Sigmoid colon (tissue), 7 donors: ENCODE measurements at regions of chr1 and their contacts with region 1.

Region 1: DNA sequence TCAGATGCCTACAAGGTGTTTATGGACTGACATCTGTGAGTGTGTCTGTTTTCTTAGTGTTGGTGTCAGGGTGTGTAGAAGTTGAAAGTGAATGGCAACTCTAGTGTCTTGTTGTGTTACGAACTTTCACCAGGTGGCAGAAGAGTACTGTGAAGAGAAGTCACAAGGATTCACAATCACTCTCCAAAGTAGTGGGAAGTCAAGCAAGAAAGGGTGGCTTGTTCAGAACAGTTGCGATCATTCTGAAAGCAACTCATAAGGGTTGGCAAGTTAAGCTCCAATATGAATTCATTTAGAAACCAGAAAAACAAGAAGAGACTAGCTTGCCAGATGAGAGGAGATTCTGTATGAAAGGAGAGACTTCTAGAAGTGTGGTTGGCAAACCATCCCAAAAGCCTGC is 86.1 kb downstream of the FASLG start:
- DNase-seq: no peak
- H3K4me3 ChIP-seq: no peak overlapping the region
- H3K27ac ChIP-seq: peak overlapping the region in 2 of 4 donors; percentile 57 to 69
- H3K4me1 ChIP-seq: peaks cover 0 to 21% (median 13%) of the 10 kb centered on the region in 4 donors
- H3K27me3 ChIP-seq: no peaks in the 10 kb centered on the region
- CTCF ChIP-seq: peak; percentile 22 to 46 (median 37)
- EP300 ChIP-seq: no peak
- POLR2A ChIP-seq: no peak

Region 2: GRCh38 chr1:172789866-172790644 is 45.0 kb after region 1 on chr1:
- intact Hi-C with region 1: no loop called
- DNase-seq: no peak
- H3K4me3 ChIP-seq: no peak overlapping the region
- H3K27ac ChIP-seq: no peak overlapping the region
- H3K4me1 ChIP-seq: no peaks in the 10 kb centered on the region
- H3K27me3 ChIP-seq: no peaks in the 10 kb centered on the region
- CTCF ChIP-seq: no peak
- EP300 ChIP-seq: no peak
- POLR2A ChIP-seq: no peak

Region 3: GRCh38 chr1:172826096-172826743 is 81.2 kb after region 1 on chr1:
- intact Hi-C with region 1: loop called (anchors 10 kb)
- DNase-seq: peak; percentile 77
- H3K4me3 ChIP-seq: peak overlapping the region in 3 of 4 donors; percentile 8 to 20 (median 14)
- H3K27ac ChIP-seq: peak overlapping the region; percentile 68 to 85 (median 70)
- H3K4me1 ChIP-seq: peaks cover 0 to 17% (median 11%) of the 10 kb centered on the region in 4 donors
- H3K27me3 ChIP-seq: no peaks in the 10 kb centered on the region
- CTCF ChIP-seq: peak; percentile 33 to 55 (median 44)
- EP300 ChIP-seq: peak in 3 of 4 donors; percentile 40 to 89 (median 57)
- POLR2A ChIP-seq: no peak

Region 4: DNA sequence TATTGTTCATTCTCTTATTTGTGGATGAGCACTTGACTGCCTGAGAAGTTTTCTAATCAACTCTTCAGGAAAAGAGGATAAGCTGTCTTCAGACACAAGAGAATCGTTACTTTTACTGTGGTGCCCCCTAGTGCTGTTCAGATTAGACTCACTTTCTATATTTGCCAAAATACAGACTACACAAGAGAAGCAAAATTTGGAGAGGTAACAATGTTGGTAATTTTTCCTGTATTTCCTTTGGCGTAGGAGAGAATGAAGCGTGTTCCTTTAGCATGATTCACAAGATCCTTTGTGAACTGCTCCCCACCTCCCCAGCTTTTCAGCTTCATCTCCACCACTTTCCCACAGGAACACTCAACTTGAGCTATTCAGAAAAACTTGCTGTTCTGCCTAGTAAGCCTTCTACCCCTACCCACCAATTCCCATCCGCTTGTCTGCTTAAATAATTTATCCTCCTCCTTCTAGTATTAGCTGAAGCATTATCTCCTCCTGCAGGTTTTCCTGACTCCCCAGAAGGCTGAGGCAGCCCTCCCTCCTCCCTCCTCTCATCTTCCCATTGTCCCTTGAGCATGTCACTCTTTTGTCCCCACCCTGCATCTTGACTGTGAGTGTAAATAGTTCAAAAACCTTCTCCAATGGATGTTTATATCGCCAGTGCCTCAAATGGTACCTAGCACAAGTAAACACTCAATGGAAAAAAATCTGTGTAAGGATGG is 457.6 kb after region 1 on chr1:
- intact Hi-C with region 1: loop called (anchors 2 kb)
- DNase-seq: no peak
- H3K4me3 ChIP-seq: no peak overlapping the region
- H3K27ac ChIP-seq: peak overlapping the region in 1 of 4 donors; percentile 20
- H3K4me1 ChIP-seq: peaks cover 0 to 28% (median 11%) of the 10 kb centered on the region in 4 donors
- H3K27me3 ChIP-seq: no peaks in the 10 kb centered on the region
- CTCF ChIP-seq: peak; percentile 17 to 58 (median 46)
- EP300 ChIP-seq: no peak
- POLR2A ChIP-seq: no peak

Region 5: DNA sequence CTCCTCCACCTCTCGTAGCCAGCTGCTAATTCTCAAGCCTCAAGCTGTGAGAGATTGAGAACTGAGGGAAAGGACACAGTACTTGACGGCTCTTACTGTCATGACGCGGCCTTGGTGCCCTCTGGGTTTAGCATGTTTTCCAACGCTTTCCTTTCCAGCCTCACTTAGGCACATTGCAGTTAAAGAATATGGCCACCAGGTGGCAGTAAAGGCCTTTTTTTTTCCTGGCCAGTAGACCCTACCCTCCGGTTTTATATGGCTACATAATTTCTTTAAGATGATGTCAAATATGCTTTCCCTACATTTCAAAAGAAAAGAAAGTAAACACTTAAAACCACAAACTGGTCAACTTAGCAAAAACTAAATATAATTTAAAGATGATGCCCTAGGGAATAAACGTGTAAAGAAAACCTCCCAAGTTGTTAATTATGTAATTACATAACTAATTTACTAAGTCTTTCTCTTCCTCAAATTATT is 675.4 kb after region 1 on chr1:
- intact Hi-C with region 1: loop called (anchors 5 kb)
- DNase-seq: no peak
- H3K4me3 ChIP-seq: peak overlapping the region in 1 of 4 donors; percentile 4
- H3K27ac ChIP-seq: peak overlapping the region in 1 of 4 donors; percentile 22
- H3K4me1 ChIP-seq: peaks cover 0 to 4% (median 0%) of the 10 kb centered on the region in 4 donors
- H3K27me3 ChIP-seq: no peaks in the 10 kb centered on the region
- CTCF ChIP-seq: peak; percentile 68 to 87 (median 78)
- EP300 ChIP-seq: no peak
- POLR2A ChIP-seq: no peak

Region 6: DNA sequence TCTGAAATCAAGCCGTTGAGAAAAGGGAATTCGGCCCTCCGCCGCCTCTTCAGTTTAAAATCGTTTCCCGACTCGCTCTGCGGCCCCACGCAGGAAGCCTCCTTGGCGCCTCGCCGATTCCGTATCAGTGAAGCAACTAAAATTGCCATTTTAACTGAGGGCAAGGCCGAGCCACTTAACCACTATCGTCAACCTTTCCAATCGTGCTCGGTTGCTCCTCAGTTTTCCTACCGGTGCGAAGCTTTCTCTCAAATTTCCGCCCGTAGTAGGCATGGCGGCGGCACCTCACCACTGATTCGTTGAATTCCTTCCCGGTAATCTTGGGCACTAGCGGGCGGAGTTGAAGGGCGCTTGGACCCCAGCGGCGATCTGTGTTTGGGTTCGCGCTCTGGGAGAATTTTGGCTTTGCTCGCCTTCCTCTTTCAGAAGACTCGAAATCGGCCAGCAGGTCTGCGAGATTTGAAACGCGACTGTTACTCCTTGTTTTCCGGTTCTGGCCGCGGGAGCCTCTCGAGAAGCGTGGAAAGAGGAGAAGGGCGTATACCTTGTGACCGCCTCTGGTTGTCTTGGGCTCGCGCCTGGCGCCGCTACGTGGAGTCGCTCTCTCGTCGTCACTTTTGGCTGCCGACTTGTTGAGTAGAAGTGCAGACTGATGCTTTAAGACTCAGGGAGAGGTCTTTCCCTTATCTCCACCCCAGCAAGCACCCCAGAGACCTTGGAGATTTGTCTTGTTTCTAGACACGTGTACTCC is 1079.5 kb after region 1 on chr1 and contains the starts of genes CENPL and DARS2:
- intact Hi-C with region 1: loop called (anchors 2 kb)
- DNase-seq: peak; percentile 99
- H3K4me3 ChIP-seq: peak within 1 kb of the TSS; percentile 55 to 78 (median 69)
- H3K27ac ChIP-seq: peak within 1 kb of the TSS; percentile 87 to 92 (median 91)
- H3K4me1 ChIP-seq: peaks cover 0 to 25% (median 19%) of the 10 kb centered on the region in 4 donors
- H3K27me3 ChIP-seq: no peaks in the 10 kb centered on the region
- CTCF ChIP-seq: no peak
- EP300 ChIP-seq: peak in 1 of 4 donors; percentile 2
- POLR2A ChIP-seq: no peak
- total RNA-seq, gene CENPL: 3.8 to 7.8 (median 5.4) TPM
- total RNA-seq, gene DARS2: 5.2 to 10.0 (median 7.3) TPM